Endothelial cell of umbilical vein (primary cell): ENCODE measurements at regions of chr6 and their contacts with region 1.

Region 1: GRCh38 chr6:107459283-107460082 is at the start of gene PDSS2:
- DNase-seq: peak; percentile 96
- H3K4me3 ChIP-seq: peak within 1 kb of the TSS; percentile 75 to 90 (median 81)
- H3K27ac ChIP-seq: peak within 1 kb of the TSS; percentile 22
- H3K4me1 ChIP-seq: peaks cover 4% of the 10 kb centered on the region
- H3K27me3 ChIP-seq: no peaks in the 10 kb centered on the region
- CTCF ChIP-seq: peak; percentile 65 to 66
- POLR2A ChIP-seq: peak; percentile 88
- total RNA-seq, gene PDSS2: 9.3 and 10.6 TPM in 2 replicates

Region 2: DNA sequence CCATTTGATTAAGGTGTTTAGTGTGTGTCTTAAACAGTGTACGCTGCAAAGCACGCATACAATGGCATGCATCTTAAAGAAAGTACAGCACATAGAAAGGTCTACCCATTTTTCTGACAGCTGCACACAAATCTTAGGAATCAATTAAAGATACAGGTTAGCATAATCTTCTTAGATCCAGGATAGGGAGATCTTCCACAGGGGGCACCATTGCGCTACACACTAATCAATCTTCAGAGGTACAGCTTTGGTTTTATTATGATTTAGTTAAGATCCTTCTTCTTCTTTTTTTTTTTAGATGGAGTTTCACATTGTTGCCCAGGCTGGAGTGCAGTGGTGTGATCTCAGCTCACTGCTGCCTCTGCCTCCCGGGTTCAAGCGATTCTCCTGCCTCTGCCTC is 280.5 kb before region 1 on chr6:
- CTCF ChIA-PET with region 1: interaction called, 10 read pairs
- POLR2A ChIA-PET with region 1: no interaction called
- dilution Hi-C with region 1: no loop called
- intact Hi-C with region 1: no loop called
- DNase-seq: peak; percentile 30
- H3K4me3 ChIP-seq: no peak overlapping the region
- H3K27ac ChIP-seq: no peak overlapping the region
- H3K4me1 ChIP-seq: no peaks in the 10 kb centered on the region
- H3K27me3 ChIP-seq: no peaks in the 10 kb centered on the region
- CTCF ChIP-seq: peak; percentile 10 to 25
- POLR2A ChIP-seq: no peak

Region 3: GRCh38 chr6:107443608-107444267 is 15.7 kb before region 1 on chr6:
- CTCF ChIA-PET with region 1: interaction called, 11 read pairs
- POLR2A ChIA-PET with region 1: interaction called, 3 read pairs
- dilution Hi-C with region 1: no loop called
- intact Hi-C with region 1: no loop called
- DNase-seq: peak; percentile 29
- H3K4me3 ChIP-seq: no peak overlapping the region
- H3K27ac ChIP-seq: no peak overlapping the region
- H3K4me1 ChIP-seq: no peaks in the 10 kb centered on the region
- H3K27me3 ChIP-seq: no peaks in the 10 kb centered on the region
- CTCF ChIP-seq: no peak
- POLR2A ChIP-seq: no peak

Region 4: DNA sequence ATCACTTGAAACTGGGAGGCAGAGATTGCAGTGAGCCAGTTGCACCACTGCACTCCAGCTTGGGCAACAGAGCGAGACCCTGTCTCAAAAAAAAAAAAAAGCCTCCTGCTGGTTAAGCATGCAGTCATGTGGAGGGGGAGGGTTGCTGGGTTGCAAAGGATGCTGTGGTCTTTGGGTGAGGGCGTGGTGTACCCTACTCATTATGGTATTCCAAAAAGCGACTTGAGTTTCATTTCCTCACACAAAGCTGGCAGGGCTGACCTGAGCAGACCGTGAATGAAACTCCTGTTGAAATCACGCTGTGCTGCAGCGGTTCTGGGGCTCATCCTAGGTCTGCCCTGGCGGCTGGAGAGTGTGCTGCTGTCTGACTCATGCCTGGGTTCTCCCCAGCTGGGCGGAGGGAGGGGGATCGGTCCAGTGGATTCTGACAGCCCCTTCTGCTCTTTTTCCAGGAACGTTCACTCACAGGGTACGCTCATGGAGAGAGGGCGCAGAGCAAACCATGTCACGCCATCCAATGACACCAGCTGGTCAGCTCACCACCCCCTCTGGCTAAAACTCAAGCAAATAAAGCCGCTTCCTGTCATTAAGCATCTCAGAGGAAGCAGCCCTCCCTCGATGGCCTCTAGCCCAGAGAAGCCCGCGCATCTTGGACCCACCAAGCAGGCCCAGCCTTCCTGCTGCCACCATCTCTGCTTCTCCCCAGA is 198.4 kb after region 1 on chr6:
- CTCF ChIA-PET with region 1: interaction called, 7 read pairs
- POLR2A ChIA-PET with region 1: no interaction called
- dilution Hi-C with region 1: no loop called
- intact Hi-C with region 1: loop called (anchors 1 kb)
- DNase-seq: peak; percentile 79
- H3K4me3 ChIP-seq: peak overlapping the region; percentile 5 to 33 (median 11)
- H3K27ac ChIP-seq: peak overlapping the region; percentile 48
- H3K4me1 ChIP-seq: peaks cover 23% of the 10 kb centered on the region
- H3K27me3 ChIP-seq: no peaks in the 10 kb centered on the region
- CTCF ChIP-seq: peak; percentile 17 to 58
- POLR2A ChIP-seq: no peak